ENCODE measurements at regions of chr2 and their contacts with region 1.

Region 1: GRCh38 chr2:171999604-172000469 is at the start of gene METAP1D:
- DNase-seq: peak; percentile 83
- H3K4me3 ChIP-seq: peak within 1 kb of the TSS; percentile 51 to 72
- H3K27ac ChIP-seq: peak within 1 kb of the TSS in 1 of 2 donors; percentile 33
- H3K4me1 ChIP-seq: no peaks in the 10 kb centered on the region
- H3K27me3 ChIP-seq: no peaks in the 10 kb centered on the region
- CTCF ChIP-seq: peak in 1 of 4 experiments; percentile 25
- POLR2A ChIP-seq: peak; percentile 35
- total RNA-seq, gene METAP1D: 11.6 to 13.6 TPM

Region 2: GRCh38 chr2:172084734-172085459 is 85.1 kb after region 1 on chr2:
- intact Hi-C with region 1: loop called (anchors 5 kb)
- DNase-seq: no peak
- H3K4me3 ChIP-seq: peak overlapping the region; percentile 3 to 15
- H3K27ac ChIP-seq: no peak overlapping the region
- H3K4me1 ChIP-seq: peaks cover 5% of the 10 kb centered on the region
- H3K27me3 ChIP-seq: peaks cover 77% of the 10 kb centered on the region
- CTCF ChIP-seq: no peak
- POLR2A ChIP-seq: no peak